Right ventricle myocardium inferior (tissue), 1 donor: ENCODE measurements at regions of chr14 and their contacts with region 1.

Region 1: GRCh38 chr14:74612350-74613021 is 449 bp upstream of the LTBP2 start:
- DNase-seq: peak; percentile 92
- ATAC-seq: peak; percentile 87

Region 2: DNA sequence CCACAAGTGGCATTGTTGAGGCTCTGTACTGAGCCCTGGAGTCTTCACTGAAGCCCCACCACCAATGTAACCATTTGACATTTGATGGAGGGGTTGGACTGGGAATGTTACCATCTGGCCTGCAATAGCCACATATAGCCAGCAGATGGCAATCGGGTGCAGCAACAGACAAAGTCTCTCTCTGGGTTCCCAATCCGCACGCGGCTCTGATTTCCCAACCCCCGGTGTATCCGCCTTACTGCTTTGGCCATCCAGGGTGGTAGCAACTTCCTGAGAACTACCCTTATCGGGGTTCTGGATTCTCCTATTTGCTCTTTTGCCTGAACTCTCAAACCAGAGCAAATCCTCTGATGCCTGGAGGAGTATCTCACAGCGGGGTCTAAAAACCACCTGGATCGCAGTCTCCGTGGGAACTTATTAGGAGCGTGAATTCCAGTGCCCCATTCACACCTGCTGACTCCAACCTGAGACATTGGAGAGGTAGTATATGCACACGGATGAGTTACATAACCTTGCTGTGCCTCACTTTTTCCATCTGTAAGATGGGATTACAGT is 250.0 kb before region 1 on chr14:
- intact Hi-C with region 1: loop called (anchors 5 kb)
- DNase-seq: peak; percentile 84
- ATAC-seq: peak; percentile 79

Region 3: DNA sequence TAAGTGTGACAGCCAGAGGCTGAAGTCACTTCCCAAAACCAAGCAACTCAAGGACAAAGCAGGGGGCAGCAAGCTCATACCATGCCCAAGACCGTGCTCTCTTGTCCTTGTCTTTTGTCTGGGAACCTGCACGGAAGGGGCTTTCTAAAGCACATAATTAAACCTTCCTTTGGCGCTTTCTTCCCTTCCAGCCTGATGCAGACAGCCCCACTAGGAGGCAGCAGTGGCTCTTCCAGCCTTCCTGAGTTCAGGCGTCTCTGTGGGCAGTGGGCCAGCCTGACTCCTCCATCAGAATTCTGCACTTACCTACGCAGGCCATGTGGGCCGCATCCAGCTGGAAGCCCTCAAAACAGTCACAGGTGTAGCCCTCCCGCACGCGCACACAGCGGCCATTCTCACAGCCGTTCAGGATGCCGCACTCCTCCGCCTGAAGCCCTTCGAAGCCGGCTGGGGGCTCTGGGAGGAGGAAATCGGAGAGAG is 111.3 kb before region 1 on chr14:
- intact Hi-C with region 1: loop called (anchors 5 kb)
- DNase-seq: no peak
- ATAC-seq: peak; percentile 54

Region 4: DNA sequence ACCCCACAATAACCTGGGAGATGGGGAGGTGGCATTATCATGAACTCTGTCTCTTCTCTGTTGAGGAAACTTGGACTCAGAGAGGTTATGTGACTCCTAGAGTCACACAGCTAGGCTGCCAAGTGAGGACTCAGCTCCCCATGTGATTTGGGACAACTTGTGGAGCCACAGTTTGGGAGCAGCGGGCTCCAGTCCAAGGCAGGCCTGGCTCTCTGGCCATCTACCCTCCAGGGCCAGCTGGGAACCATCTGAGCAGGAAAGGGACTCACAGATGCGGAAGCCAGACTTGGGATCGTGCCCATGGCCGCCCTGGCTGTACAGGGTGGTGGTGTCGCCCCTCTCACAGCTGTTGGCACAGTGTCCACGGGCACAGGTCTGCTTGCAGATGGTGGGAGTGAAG is 59.9 kb before region 1 on chr14:
- intact Hi-C with region 1: loop called (anchors 5 kb)
- DNase-seq: peak; percentile 86
- ATAC-seq: peak; percentile 51

Region 5: GRCh38 chr14:74712499-74713394 is 100.3 kb after region 1 on chr14 and contains the starts of genes AREL1 and FCF1:
- intact Hi-C with region 1: loop called (anchors 5 kb)
- DNase-seq: peak; percentile 79
- ATAC-seq: peak; percentile 98
- total RNA-seq, gene AREL1: 22.7 TPM
- total RNA-seq, gene FCF1: 37.6 TPM

Region 6: DNA sequence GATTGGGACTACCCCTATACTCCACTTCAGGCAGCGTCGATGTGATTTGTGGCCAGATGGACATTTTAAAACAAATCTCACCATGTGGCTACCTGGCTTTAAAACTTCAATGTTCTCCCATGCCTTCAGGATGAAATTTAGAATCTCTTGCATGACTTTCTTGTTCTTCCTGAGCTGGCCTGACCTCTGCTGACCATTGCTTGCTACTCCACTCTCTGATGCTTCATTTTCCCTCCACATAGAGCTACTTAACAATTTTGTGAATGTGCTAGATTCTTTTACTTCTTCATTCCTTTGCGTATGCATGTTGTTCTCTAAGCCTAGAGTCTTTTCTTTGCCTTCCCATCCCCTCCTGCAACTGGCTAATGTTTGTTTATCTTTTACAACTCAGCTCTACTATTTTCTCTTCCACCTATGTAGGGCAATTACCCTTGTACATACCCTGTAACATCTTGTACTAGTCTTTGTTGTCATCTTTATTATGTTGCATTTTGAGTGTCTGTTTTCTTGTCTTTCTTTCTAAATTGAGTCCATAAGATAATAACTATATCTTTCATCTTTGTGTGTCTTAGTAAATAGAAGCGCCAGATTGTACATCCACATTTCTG is 191.8 kb after region 1 on chr14:
- intact Hi-C with region 1: loop called (anchors 5 kb)
- DNase-seq: no peak
- ATAC-seq: no peak